ENCODE measurements at regions of chr12 and their contacts with region 1.

Region 1: DNA sequence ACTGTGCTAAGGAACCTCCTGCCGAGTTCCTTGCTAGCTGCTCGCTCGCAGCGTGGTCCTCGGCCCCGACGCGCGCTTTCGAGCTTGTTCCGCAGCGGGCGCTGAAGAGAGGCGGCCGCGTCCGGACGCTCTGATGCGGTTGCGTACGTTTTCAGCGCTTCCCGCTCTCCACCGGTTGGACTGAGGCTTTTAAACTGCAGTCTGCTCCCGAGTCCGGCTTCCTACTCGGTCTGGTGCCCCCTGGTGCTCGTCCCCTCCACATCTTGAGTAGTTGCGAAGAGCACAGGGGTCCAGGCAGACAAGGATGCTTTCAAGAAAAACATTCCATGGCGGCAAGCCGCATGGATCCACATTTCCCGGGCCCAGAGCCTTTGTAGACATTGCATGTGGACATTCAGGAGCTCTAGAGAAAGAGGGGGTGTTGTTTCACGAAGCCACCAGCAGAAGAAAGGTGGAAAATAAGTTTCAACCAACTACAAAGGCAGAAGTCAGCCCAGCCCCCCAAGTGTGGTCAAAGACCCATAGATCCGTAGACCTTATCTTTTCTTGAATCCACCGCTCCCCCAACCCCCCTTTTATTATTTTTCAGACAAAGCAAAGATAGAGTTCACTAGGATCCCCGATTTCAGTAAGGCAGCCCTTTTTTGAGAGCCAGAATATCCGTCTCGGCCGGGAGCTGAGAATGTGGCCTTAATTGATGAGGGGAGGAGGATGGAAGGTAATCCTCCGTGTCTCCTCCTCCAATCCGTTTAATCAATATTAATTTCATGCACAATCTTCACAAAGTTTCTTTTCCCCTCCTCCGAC is 984 bp upstream of the WNK1 start:
- DNase-seq: peak; percentile 94 to 98 (median 96)
- ATAC-seq: peak; percentile 74 to 77
- H3K4me3 ChIP-seq: peak overlapping the region; percentile 65
- H3K27ac ChIP-seq: peak overlapping the region; percentile 82
- H3K4me1 ChIP-seq: no peaks in the 10 kb centered on the region
- H3K27me3 ChIP-seq: no peaks in the 10 kb centered on the region

Region 2: GRCh38 chr12:569803-570434 is 181.5 kb before region 1 on chr12:
- intact Hi-C with region 1: loop called in 3 of 4 experiments (anchors 5 kb)
- DNase-seq: peak; percentile 91 to 97 (median 96)
- ATAC-seq: peak; percentile 78 to 82
- H3K4me3 ChIP-seq: peak overlapping the region; percentile 47
- H3K27ac ChIP-seq: peak overlapping the region; percentile 93
- H3K4me1 ChIP-seq: peaks cover 9% of the 10 kb centered on the region
- H3K27me3 ChIP-seq: no peaks in the 10 kb centered on the region

Region 3: DNA sequence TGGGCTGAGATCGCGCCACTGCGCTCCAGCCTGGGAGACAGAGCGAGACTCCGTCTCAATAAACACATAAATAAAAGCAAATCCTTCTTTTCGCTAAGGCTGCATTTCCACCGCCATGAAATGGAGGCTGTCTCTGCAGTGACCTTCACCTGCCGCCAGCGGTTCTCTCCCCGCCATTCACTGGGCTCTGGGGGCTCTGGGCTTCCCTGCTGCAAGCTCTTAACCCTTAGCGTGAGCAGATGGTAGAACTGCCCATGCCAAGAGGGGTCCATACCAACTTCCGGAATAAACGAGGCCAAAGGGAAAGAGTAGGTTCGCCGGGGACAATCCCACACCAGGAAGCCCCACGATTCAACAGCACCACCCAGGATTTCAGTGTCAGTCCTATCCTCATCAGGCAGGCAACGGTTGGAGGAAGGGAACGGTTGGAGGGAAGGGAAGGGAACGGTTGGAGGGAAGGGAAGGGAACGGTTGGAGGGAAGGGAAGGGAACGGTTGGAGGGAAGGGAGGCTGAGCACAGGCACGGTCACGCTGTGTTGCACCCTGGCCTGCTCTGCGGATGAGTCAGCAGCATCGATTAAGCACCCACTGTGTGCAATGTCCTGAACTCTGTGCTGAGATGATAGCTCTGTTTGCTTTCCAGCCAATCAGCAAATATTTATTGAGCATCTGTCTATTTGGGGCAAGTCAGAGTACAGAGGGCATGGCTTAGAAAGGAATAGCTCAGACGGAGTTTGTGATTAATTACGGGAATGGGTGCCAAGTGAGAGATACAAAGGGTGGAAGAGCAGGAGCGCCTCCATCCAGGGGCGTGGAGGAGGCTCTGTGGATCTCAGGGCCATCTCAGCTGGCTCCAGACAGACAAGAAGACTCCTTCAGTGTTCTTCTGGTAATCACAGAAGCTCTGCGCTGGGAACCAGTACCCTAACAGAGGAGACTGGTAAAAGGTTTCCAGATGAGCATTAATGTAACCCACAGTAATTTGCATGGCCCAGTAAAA is 166.0 kb before region 1 on chr12:
- intact Hi-C with region 1: loop called in 1 of 4 experiments (anchors 5 kb)
- DNase-seq: no peak
- ATAC-seq: no peak
- H3K4me3 ChIP-seq: no peak overlapping the region
- H3K27ac ChIP-seq: no peak overlapping the region
- H3K4me1 ChIP-seq: no peaks in the 10 kb centered on the region
- H3K27me3 ChIP-seq: no peaks in the 10 kb centered on the region

Region 4: DNA sequence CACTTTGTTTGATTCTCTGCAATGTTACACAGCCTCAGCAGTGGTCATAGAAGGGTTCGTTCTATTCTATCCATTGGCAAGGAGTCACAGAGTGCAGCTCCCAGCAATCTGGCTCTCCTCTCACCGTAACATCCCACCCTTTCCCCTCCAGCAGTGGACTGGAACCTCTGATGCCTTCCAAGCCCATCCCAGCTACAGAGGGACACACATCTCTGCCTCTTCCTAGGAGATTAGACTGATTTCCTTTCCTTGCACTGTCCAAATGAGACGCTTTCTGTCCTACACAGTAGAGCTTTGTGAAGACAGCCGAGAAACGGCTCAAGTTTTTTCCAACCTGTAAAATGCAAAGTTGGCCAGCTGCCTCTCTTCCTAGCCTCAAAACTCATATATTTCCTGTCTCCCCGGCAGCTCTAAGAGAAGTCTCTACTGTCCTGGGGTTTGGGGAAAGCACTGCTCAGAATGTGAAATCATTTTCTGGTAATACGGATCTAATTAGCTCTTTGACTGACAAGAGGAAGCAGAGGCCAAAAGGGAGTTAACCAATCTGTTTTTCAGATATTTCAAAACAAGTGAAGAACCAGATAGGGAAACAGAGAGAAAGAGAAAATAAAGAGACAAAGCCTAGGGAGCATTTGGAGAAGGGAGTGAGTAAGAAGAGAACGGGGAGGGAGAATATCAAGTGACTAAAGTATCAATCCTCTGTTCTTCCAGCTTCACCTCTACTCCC is 88.7 kb before region 1 on chr12:
- intact Hi-C with region 1: loop called in 1 of 4 experiments (anchors 10 kb)
- DNase-seq: peak in 1 of 3 donors; percentile 27
- ATAC-seq: peak; percentile 71 to 89
- H3K4me3 ChIP-seq: peak overlapping the region; percentile 35
- H3K27ac ChIP-seq: peak overlapping the region; percentile 66
- H3K4me1 ChIP-seq: peaks cover 11% of the 10 kb centered on the region
- H3K27me3 ChIP-seq: no peaks in the 10 kb centered on the region

Region 5: GRCh38 chr12:712172-712863 is 39.1 kb before region 1 on chr12:
- intact Hi-C with region 1: no loop called
- DNase-seq: no peak
- ATAC-seq: no peak
- H3K4me3 ChIP-seq: no peak overlapping the region
- H3K27ac ChIP-seq: no peak overlapping the region
- H3K4me1 ChIP-seq: no peaks in the 10 kb centered on the region
- H3K27me3 ChIP-seq: no peaks in the 10 kb centered on the region

Region 6: GRCh38 chr12:789852-790563 is 38.6 kb after region 1 on chr12:
- intact Hi-C with region 1: no loop called
- DNase-seq: no peak
- ATAC-seq: peak; percentile 36 to 43
- H3K4me3 ChIP-seq: no peak overlapping the region
- H3K27ac ChIP-seq: no peak overlapping the region
- H3K4me1 ChIP-seq: peaks cover 3% of the 10 kb centered on the region
- H3K27me3 ChIP-seq: no peaks in the 10 kb centered on the region

Region 7: GRCh38 chr12:818733-819132 is 67.3 kb after region 1 on chr12:
- intact Hi-C with region 1: loop called (anchors 5 to 10 kb)
- DNase-seq: no peak
- ATAC-seq: no peak
- H3K4me3 ChIP-seq: no peak overlapping the region
- H3K27ac ChIP-seq: no peak overlapping the region
- H3K4me1 ChIP-seq: peaks cover 2% of the 10 kb centered on the region
- H3K27me3 ChIP-seq: no peaks in the 10 kb centered on the region